WTC11 (cell line): ENCODE measurements at regions of chr18 and their contacts with region 1.

Region 1: GRCh38 chr18:76922107-76922506 is 99.8 kb downstream of the ZNF236 start:
- DNase-seq: peak; percentile 62
- ATAC-seq: peak; percentile 99
- H3K4me3 Mint-ChIP-seq: no peak overlapping the region
- H3K27ac Mint-ChIP-seq: no peak overlapping the region
- H3K4me1 Mint-ChIP-seq: no peaks in the 10 kb centered on the region
- H3K27me3 Mint-ChIP-seq: no peaks in the 10 kb centered on the region
- CTCF ChIP-seq: no peak

Region 2: DNA sequence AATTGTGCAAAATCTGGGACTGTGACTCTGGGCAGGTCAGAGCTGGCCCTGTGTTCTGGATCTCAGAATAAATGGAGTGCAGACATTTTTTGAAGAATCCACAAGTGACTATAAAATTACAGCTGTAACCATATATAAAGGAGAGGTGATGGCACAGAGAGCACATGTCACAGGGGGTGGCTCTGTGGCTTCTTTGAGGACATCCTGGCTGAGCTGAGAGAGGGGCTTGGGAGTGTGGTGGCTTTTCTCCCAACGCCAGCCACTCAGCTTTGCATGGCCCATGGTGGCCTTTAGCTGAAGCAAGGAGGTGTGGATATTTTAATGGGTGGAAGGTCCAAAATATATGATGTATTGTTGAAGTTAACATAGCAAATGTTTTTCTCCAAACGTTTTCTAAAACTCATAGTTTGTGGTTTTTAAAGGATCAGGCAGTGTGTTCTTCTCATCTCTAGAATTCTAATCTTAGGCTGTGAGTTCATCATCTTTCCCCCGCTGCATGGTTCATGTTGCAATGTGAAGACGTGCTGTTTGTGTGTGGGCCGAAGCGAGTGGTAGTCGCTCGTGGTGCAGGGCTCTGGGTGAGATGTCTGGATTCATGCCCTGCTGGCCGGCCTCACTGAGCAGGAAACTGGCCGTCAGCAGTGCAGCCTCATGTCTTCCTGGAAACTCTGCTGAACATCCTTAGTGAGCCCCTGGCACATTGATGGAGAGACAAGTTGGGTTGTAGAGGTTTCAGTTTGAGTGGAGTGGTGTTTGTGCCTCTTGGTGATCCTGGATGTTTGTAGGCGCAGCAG is 10.1 kb after region 1 on chr18:
- CTCF ChIA-PET with region 1: interaction called, 15 read pairs
- POLR2A ChIA-PET with region 1: no interaction called
- DNase-seq: no peak
- ATAC-seq: no peak
- H3K4me3 Mint-ChIP-seq: no peak overlapping the region
- H3K27ac Mint-ChIP-seq: no peak overlapping the region
- H3K4me1 Mint-ChIP-seq: no peaks in the 10 kb centered on the region
- H3K27me3 Mint-ChIP-seq: no peaks in the 10 kb centered on the region
- CTCF ChIP-seq: no peak

Region 3: DNA sequence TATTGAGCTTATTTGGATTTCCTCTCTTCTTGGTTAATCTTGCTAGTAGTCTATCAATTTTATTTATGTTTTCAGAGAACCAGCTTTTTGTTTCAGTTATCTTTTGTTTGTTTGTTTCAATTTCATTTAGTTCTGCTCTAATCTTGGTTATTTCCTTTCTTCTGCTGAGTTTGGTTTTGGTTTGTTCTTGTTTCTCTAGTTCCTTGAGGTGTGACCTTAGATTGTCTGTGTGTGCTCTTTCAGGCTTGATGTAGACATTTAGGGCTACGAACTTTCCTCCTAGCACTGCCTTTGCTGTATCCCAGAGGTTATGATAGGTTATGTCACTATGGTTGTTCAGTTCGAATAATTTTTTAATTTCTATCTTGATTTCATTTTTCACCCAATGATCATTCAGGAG is 41.8 kb after region 1 on chr18:
- CTCF ChIA-PET with region 1: interaction called, 15 read pairs
- POLR2A ChIA-PET with region 1: no interaction called
- DNase-seq: no peak
- ATAC-seq: no peak
- H3K4me3 Mint-ChIP-seq: no peak overlapping the region
- H3K27ac Mint-ChIP-seq: no peak overlapping the region; the same call in 1 of the 2 replicates
- H3K4me1 Mint-ChIP-seq: peaks cover 8% of the 10 kb centered on the region
- H3K27me3 Mint-ChIP-seq: no peaks in the 10 kb centered on the region
- CTCF ChIP-seq: no peak

Region 4: DNA sequence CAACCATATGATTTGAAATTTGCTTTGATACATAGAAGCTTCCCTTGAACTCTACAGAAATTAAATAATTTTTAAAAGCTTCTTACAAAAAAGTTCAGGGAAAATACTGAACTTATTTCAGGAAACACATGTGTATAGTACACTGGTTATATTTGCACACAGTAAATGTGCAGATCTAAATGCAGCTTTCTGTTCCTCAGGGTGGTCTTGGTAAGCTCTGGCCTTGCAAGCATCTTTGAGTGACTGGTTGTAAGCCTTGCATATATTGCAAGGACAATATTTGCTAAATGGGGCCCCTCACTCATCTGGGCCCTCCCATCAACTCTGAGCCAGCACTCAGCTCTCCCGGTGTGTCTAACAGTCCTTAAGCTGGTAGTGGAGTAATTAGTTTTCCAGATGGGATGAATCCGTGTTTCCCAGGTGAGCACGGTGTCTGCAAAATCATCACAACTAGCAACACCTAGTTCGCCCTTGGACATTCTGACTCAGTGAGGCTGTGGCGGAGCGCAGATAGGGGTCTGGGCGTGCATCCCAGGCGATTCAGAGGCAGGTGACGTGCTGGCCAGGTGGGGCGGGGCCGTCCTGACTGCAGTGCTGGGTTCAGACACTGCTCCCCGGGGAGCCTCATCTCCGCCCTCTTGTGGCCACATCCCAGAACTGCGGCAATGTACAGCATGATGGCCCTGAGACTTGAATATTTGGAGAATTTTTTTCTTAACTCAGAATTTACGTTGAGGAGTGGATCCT is 60.9 kb after region 1 on chr18:
- CTCF ChIA-PET with region 1: interaction called, 67 read pairs
- POLR2A ChIA-PET with region 1: no interaction called
- DNase-seq: peak; percentile 97
- ATAC-seq: peak; percentile 93
- H3K4me3 Mint-ChIP-seq: no peak overlapping the region
- H3K27ac Mint-ChIP-seq: 0 out of 2 replicates have a peak overlapping the region, but pooled peaks have one; percentile 43
- H3K4me1 Mint-ChIP-seq: peaks cover 45% of the 10 kb centered on the region
- H3K27me3 Mint-ChIP-seq: no peaks in the 10 kb centered on the region
- CTCF ChIP-seq: peak; percentile 88

Region 5: GRCh38 chr18:76988031-76988826 is 66.1 kb after region 1 on chr18:
- CTCF ChIA-PET with region 1: interaction called, 67 read pairs
- POLR2A ChIA-PET with region 1: no interaction called
- DNase-seq: no peak
- ATAC-seq: no peak
- H3K4me3 Mint-ChIP-seq: no peak overlapping the region
- H3K27ac Mint-ChIP-seq: 0 out of 2 replicates have a peak overlapping the region, but pooled peaks have one; percentile 16
- H3K4me1 Mint-ChIP-seq: peaks cover 28% of the 10 kb centered on the region
- H3K27me3 Mint-ChIP-seq: no peaks in the 10 kb centered on the region; the same call in 1 of the 2 replicates
- CTCF ChIP-seq: no peak